T-cell (primary cell): ENCODE measurements at regions of chr2 and their contacts with region 1.

Region 1: GRCh38 chr2:9647884-9648283 is 17.1 kb upstream of the YWHAQ start:
- DNase-seq: no peak
- ATAC-seq: no peak
- H3K4me3 ChIP-seq: no peak overlapping the region
- H3K4me3 Mint-ChIP-seq: no peak overlapping the region
- H3K27ac ChIP-seq: no peak overlapping the region
- H3K27ac Mint-ChIP-seq: no peak overlapping the region
- H3K4me1 ChIP-seq: peaks cover 0 to 9% of the 10 kb centered on the region in 2 experiments
- H3K4me1 Mint-ChIP-seq: peaks cover 6 to 15% (median 6%) of the 10 kb centered on the region in 3 donors
- H3K27me3 ChIP-seq: peaks cover 0 to 7% of the 10 kb centered on the region in 2 experiments
- H3K27me3 Mint-ChIP-seq: no peaks in the 10 kb centered on the region

Region 2: DNA sequence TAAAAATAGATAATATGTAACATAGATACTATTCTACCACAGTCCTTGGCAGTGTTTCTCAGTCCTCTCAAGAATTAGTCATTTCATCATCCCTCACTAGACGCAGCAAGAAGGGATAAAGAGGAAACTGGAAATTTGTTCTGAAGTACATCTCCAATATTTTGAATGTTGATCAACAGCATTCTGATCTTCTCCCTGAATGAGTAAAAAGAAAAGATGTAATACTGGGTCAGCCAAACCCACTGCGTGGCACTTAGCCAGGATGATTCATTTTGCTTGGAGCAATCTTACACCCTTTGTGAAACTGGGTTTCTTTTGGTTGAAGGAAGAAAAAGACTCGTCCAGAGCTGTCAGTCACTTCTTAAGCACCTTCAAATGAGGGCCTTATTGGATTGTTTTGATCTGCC is 249.4 kb after region 1 on chr2:
- CTCF ChIA-PET with region 1: no interaction called
- POLR2A ChIA-PET with region 1: interaction called in 1 of 2 experiments, 16 read pairs
- DNase-seq: no peak
- ATAC-seq: no peak
- H3K4me3 ChIP-seq: no peak overlapping the region
- H3K4me3 Mint-ChIP-seq: no peak overlapping the region
- H3K27ac ChIP-seq: no peak overlapping the region
- H3K27ac Mint-ChIP-seq: no peak overlapping the region
- H3K4me1 ChIP-seq: peaks cover 0 to 14% of the 10 kb centered on the region in 2 experiments
- H3K4me1 Mint-ChIP-seq: peaks cover 15 to 31% (median 19%) of the 10 kb centered on the region in 3 donors
- H3K27me3 ChIP-seq: no peaks in the 10 kb centered on the region
- H3K27me3 Mint-ChIP-seq: no peaks in the 10 kb centered on the region